ENCODE measurements at regions of chr19 and their contacts with region 1.

Region 1: DNA sequence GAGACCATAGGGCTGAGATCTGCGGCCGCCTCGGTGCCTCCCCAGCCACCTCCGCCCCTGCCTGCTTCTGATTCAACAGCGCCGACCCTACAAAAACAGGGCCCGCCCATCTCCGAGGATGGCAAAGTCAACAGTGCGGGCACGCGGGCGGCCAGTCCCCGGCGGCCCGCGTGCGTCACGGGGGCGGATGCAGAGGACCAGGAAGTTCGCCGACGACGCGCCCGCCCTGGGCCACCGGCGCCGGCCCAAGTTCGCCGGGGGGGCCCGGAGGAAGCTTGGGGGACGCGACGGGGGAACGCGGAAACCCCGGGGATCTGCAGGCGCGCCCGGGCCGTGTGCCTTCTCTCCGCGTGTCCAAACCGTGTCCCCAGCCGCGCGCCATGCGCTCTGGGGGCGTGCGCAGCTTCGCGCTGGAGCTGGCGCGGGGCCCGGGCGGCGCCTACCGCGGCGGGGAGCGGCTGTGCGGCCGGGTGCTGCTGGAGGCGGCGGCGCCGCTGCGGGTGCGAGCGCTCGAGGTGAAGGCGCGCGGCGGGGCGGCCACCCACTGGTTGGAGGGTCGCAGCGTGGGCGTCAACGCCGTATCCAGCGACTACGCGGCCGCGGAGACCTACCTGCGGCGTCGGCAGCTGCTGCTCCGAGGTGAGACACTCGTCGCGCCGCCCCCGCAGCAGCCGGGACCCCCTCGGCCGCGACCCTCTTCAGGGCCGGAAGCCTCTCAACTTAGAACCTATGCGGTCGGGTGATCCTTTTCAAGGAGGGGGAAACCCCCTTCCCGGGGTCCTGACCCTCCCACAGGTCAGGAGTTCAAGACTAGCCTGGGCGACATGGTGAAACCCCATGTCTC is 6.8 kb upstream of the ARRDC2 start:
- DNase-seq: peak; percentile 92
- H3K4me3 Mint-ChIP-seq: peak overlapping the region; percentile 90
- H3K27ac Mint-ChIP-seq: peak overlapping the region; percentile 100
- H3K4me1 Mint-ChIP-seq: peaks cover 38% of the 10 kb centered on the region
- H3K27me3 Mint-ChIP-seq: peaks cover 2% of the 10 kb centered on the region

Region 2: GRCh38 chr19:17938092-17938845 is 62.9 kb before region 1 on chr19:
- CTCF ChIA-PET with region 1: interaction called, 45 read pairs
- POLR2A ChIA-PET with region 1: interaction called, 5 read pairs
- DNase-seq: peak; percentile 86
- H3K4me3 Mint-ChIP-seq: no peak overlapping the region
- H3K27ac Mint-ChIP-seq: no peak overlapping the region
- H3K4me1 Mint-ChIP-seq: peaks cover 13% of the 10 kb centered on the region
- H3K27me3 Mint-ChIP-seq: no peaks in the 10 kb centered on the region

Region 3: GRCh38 chr19:18074190-18074589 is 73.0 kb after region 1 on chr19:
- CTCF ChIA-PET with region 1: no interaction called
- POLR2A ChIA-PET with region 1: no interaction called
- DNase-seq: no peak
- H3K4me3 Mint-ChIP-seq: no peak overlapping the region
- H3K27ac Mint-ChIP-seq: peak overlapping the region; percentile 62
- H3K4me1 Mint-ChIP-seq: peaks cover 16% of the 10 kb centered on the region
- H3K27me3 Mint-ChIP-seq: no peaks in the 10 kb centered on the region